ENCODE measurements at regions of chr3 and their contacts with region 1.

Region 1: GRCh38 chr3:161754420-161755053 is 257.9 kb downstream of the OTOL1 start:
- DNase-seq: no peak
- ATAC-seq: no peak
- H3K4me3 ChIP-seq: no peak overlapping the region
- H3K27ac ChIP-seq: no peak overlapping the region
- H3K4me1 ChIP-seq: no peaks in the 10 kb centered on the region
- H3K27me3 ChIP-seq: no peaks in the 10 kb centered on the region
- CTCF ChIP-seq: no peak
- POLR2A ChIP-seq: no peak
- RAD21 ChIP-seq: no peak

Region 2: GRCh38 chr3:161555340-161555739 is 199.2 kb before region 1 on chr3:
- CTCF ChIA-PET with region 1: no interaction called
- POLR2A ChIA-PET with region 1: interaction called, 24 read pairs
- dilution Hi-C with region 1: no loop called
- in situ Hi-C with region 1: no loop called
- intact Hi-C with region 1: no loop called
- DNase-seq: no peak
- ATAC-seq: no peak
- H3K4me3 ChIP-seq: no peak overlapping the region
- H3K27ac ChIP-seq: no peak overlapping the region
- H3K4me1 ChIP-seq: no peaks in the 10 kb centered on the region
- H3K27me3 ChIP-seq: no peaks in the 10 kb centered on the region
- CTCF ChIP-seq: no peak
- POLR2A ChIP-seq: no peak
- RAD21 ChIP-seq: no peak